Endothelial cell of umbilical vein (primary cell): ENCODE measurements at regions of chr11 and their contacts with region 1.

Region 1: GRCh38 chr11:119481021-119481666 is 58.2 kb upstream of the THY1 start:
- DNase-seq: peak; percentile 60
- H3K4me3 ChIP-seq: no peak overlapping the region
- H3K27ac ChIP-seq: no peak overlapping the region
- H3K4me1 ChIP-seq: no peaks in the 10 kb centered on the region
- H3K27me3 ChIP-seq: no peaks in the 10 kb centered on the region
- CTCF ChIP-seq: peak; percentile 96 to 98
- POLR2A ChIP-seq: no peak

Region 2: GRCh38 chr11:119347242-119347641 is 133.9 kb before region 1 on chr11:
- CTCF ChIA-PET with region 1: no interaction called
- POLR2A ChIA-PET with region 1: no interaction called
- dilution Hi-C with region 1: no loop called
- intact Hi-C with region 1: no loop called
- DNase-seq: no peak
- H3K4me3 ChIP-seq: no peak overlapping the region
- H3K27ac ChIP-seq: no peak overlapping the region
- H3K4me1 ChIP-seq: no peaks in the 10 kb centered on the region
- H3K27me3 ChIP-seq: peaks cover 0 to 3% of the 10 kb centered on the region in 2 experiments
- CTCF ChIP-seq: no peak
- POLR2A ChIP-seq: no peak

Region 3: DNA sequence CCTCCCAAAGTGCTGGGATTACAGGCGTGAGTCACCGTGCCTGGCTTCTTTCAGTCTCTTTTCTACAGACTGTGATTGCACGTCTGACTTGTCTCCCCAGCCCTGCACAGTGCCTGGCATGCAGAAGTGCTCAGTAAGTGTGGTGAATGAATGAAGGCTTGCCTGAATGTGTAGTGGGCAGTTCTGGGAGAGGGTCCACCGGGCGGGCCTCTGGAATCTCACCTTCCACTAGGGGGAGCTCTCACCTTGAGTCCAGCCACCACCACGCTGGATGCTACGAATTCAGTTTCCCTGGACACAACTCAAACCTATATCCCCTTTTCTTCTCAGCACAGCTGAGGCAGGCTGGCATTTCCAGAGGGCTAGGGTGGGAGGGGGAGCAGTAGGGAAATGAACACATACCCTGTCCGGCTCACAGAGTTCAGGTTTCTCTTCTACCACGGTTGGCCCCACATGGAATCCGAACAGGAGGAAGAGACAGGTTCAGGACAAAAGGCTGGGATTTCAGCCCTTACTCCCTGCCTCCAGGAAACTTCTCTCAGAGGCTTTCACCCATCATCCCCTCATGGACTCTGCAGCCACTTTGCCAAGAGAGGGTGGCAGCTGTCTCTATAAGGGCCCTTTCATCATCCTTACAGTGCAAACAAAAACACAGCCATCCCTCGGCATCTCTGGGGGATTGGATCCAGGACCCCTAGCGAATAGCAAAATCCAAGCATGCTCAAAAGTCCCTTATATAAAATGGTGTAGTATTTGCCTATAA is 161.0 kb after region 1 on chr11:
- CTCF ChIA-PET with region 1: interaction called, 3 read pairs
- POLR2A ChIA-PET with region 1: no interaction called
- dilution Hi-C with region 1: no loop called
- intact Hi-C with region 1: loop called (anchors 5 kb)
- DNase-seq: peak; percentile 13
- H3K4me3 ChIP-seq: no peak overlapping the region
- H3K27ac ChIP-seq: no peak overlapping the region
- H3K4me1 ChIP-seq: no peaks in the 10 kb centered on the region
- H3K27me3 ChIP-seq: peaks cover 0 to 2% of the 10 kb centered on the region in 2 experiments
- CTCF ChIP-seq: peak; percentile 59 to 69
- POLR2A ChIP-seq: no peak

Region 4: DNA sequence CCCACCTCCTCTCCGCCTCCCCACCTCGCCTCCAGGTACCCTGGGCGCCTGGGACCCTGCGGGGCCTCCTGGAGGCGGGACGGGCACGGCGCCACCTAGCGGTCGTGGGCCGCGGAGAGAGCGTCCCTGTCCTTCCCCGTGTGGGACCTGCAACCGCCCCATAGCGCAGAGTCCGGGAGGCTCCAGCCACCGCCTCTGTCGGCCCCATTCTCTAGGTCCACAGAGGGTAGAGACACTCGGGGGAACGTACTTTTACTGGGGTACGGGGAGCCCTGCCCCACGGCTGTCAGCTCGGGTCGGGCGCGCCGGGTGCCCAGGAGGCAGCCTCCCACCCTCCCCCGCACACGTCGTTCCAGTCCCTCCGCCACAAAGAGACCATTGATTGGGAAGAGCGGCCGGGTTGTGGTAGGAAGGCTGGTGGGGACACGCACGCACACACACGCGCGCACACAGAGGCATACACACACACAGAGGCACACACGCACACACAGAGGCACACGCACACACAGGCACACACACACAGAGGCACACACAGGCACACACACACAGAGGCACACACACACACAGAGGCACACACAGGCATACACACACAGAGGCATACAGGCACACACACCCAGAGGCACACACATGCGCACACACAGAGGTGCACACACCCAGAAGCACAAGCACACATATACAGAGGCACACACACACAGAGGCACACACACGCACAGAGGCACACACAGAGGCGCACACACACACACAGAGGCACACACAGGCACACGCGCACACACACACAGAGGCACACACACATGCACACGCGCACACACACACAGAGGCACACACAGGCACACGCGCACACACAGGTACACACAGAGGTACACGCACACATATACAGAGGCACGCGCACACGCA is 260.5 kb after region 1 on chr11:
- CTCF ChIA-PET with region 1: interaction called, 3 read pairs
- POLR2A ChIA-PET with region 1: no interaction called
- dilution Hi-C with region 1: no loop called
- intact Hi-C with region 1: loop called (anchors 2 kb)
- DNase-seq: peak; percentile 20
- H3K4me3 ChIP-seq: no peak overlapping the region
- H3K27ac ChIP-seq: no peak overlapping the region
- H3K4me1 ChIP-seq: no peaks in the 10 kb centered on the region
- H3K27me3 ChIP-seq: peaks cover 23 to 30% of the 10 kb centered on the region in 2 experiments
- CTCF ChIP-seq: peak; percentile 79 to 94
- POLR2A ChIP-seq: no peak

Region 5: GRCh38 chr11:120108154-120108865 is 627.2 kb after region 1 on chr11:
- CTCF ChIA-PET with region 1: interaction called, 31 read pairs
- POLR2A ChIA-PET with region 1: no interaction called
- dilution Hi-C with region 1: no loop called
- intact Hi-C with region 1: loop called (anchors 1 kb)
- DNase-seq: peak; percentile 42
- H3K4me3 ChIP-seq: no peak overlapping the region
- H3K27ac ChIP-seq: no peak overlapping the region
- H3K4me1 ChIP-seq: no peaks in the 10 kb centered on the region
- H3K27me3 ChIP-seq: peaks cover 0 to 2% of the 10 kb centered on the region in 2 experiments
- CTCF ChIP-seq: peak; percentile 96 to 99
- POLR2A ChIP-seq: no peak